ENCODE measurements at regions of chr15 and their contacts with region 1.

Region 1: DNA sequence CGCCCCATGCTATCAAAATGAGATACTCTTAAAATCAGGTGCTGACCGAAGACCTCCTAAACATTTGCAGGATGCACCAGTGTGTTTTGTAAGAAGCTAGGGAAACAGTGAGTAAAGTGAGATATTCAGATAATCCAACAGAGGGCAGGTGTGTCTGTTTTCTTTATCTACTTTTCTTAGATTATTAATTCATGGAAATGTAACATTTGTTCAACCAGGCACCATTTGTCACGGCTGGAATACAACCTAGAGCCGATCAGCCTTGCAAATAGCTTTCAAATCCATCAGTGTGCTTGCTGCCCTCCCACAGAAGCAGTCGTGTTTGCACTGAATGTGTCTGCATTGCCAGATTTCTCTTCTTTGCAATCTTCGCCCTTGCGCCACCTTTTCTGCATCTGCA is 201.9 kb upstream of the CHRM5 start:
- DNase-seq: peak; percentile 30
- ATAC-seq: peak; percentile 40
- H3K4me3 ChIP-seq: no peak overlapping the region
- H3K27ac ChIP-seq: no peak overlapping the region
- H3K4me1 ChIP-seq: no peaks in the 10 kb centered on the region
- H3K27me3 ChIP-seq: peaks cover 21% of the 10 kb centered on the region
- CTCF ChIP-seq: peak; percentile 52; the same call in 1 of the 2 replicates

Region 2: GRCh38 chr15:33679061-33679460 is 87.3 kb before region 1 on chr15:
- CTCF ChIA-PET with region 1: no interaction called
- POLR2A ChIA-PET with region 1: no interaction called
- intact Hi-C with region 1: no loop called
- DNase-seq: no peak
- ATAC-seq: no peak
- H3K4me3 ChIP-seq: no peak overlapping the region
- H3K27ac ChIP-seq: no peak overlapping the region
- H3K4me1 ChIP-seq: no peaks in the 10 kb centered on the region
- H3K27me3 ChIP-seq: peaks cover 86% of the 10 kb centered on the region
- CTCF ChIP-seq: no peak

Region 3: DNA sequence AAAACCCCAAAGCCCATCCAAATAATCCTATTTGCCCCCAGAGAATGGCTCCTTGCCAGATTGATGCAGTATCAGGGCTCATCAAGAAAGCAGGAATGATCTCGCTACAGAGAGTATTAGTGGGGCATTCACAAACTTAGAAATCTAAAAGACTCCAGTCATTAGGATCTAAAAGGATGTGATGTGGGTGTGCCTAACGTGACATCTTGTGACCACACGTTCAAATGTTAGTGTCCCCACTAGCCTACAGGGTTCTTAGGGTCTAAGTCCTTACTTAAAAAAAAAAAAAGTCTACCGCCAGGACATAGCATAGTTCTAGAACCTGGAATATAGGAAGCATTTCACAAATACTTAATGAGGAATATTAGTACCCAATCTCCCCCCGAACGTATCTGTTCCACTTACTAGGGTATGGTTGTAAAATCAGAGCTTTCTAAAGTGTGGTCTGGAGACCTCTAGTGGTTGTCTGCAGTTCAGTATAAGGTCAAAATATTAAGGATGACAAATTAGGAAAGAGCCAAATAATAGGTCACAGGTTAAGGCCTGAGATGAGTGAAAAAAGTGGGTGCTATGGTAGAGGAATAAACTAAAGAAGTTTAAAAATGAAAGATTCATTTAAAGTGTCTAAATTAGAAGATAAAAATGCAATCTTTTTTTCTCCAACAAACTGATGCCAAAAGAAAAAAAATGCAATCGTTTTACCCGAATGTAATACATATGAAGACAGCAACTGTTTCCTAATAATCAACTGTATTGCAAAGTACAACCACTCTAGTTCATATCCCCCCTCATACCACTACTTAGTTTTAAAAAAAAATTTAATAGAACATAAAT is 197.7 kb after region 1 on chr15:
- CTCF ChIA-PET with region 1: interaction called, 3 read pairs
- POLR2A ChIA-PET with region 1: no interaction called
- intact Hi-C with region 1: loop called (anchors 2 kb)
- DNase-seq: peak; percentile 68
- ATAC-seq: peak; percentile 80
- H3K4me3 ChIP-seq: no peak overlapping the region
- H3K27ac ChIP-seq: no peak overlapping the region
- H3K4me1 ChIP-seq: peaks cover 17% of the 10 kb centered on the region
- H3K27me3 ChIP-seq: no peaks in the 10 kb centered on the region
- CTCF ChIP-seq: peak; percentile 93

Region 4: DNA sequence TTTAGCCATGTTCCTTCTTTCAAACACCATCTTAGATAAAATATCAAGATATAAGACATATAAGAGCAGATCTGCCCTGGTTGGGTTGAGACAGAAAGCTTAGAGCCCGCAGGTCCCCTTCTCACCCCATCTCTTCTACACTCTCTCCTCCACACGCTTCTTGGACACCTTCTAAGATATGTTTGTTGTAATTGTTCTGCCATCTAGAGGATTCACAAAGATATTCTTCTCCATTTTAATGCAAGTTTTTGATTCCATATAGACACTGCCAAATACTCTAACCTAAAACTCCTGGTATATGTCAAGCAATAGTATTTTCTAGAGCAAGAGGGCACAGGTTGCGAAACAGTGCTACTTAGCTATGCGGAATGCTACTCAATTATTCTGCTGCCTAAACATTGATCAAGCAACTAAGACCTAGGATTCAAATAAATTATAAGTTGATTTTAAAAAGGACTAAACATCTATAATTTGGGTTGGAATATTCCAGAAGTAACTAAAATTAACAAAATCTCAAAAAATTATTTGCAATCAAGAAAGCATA is 208.7 kb after region 1 on chr15:
- CTCF ChIA-PET with region 1: no interaction called
- POLR2A ChIA-PET with region 1: no interaction called
- intact Hi-C with region 1: loop called (anchors 1 kb)
- DNase-seq: peak; percentile 37
- ATAC-seq: peak; percentile 57; the same call in 1 of the 2 replicates
- H3K4me3 ChIP-seq: no peak overlapping the region
- H3K27ac ChIP-seq: no peak overlapping the region
- H3K4me1 ChIP-seq: no peaks in the 10 kb centered on the region
- H3K27me3 ChIP-seq: no peaks in the 10 kb centered on the region
- CTCF ChIP-seq: peak; percentile 43; the same call in 1 of the 2 replicates

Region 5: DNA sequence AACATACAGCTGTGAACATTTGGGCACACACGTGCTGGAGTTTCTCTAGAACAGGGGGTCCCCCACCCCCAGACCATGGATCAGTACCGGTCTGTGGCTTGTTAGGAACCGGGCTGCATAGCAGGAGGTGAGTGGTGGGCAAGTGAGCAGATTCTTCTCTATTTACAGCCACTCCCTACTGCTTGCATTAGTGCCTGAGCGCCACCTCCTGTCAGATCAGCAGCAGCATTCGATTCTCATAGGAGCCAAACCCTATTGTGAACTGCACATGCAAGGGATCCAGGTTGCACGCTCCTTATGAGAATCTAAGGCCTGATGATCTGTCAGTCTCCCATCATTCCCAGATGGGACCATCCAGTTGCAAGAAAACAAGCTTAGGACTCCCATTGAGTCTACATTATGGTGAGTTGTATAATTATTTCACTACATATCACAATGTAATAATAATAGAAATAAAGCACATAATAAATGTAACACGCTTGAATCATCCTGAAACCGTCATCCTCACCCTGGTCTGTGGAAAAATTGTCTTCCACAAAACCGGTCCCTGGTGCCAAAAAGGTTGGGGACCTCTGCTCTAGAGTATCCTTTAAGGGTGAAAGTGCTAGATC is 227.7 kb after region 1 on chr15:
- CTCF ChIA-PET with region 1: no interaction called
- POLR2A ChIA-PET with region 1: no interaction called
- intact Hi-C with region 1: loop called (anchors 1 kb)
- DNase-seq: peak; percentile 68
- ATAC-seq: peak; percentile 98
- H3K4me3 ChIP-seq: no peak overlapping the region
- H3K27ac ChIP-seq: no peak overlapping the region
- H3K4me1 ChIP-seq: no peaks in the 10 kb centered on the region
- H3K27me3 ChIP-seq: no peaks in the 10 kb centered on the region
- CTCF ChIP-seq: peak; percentile 80

Region 6: DNA sequence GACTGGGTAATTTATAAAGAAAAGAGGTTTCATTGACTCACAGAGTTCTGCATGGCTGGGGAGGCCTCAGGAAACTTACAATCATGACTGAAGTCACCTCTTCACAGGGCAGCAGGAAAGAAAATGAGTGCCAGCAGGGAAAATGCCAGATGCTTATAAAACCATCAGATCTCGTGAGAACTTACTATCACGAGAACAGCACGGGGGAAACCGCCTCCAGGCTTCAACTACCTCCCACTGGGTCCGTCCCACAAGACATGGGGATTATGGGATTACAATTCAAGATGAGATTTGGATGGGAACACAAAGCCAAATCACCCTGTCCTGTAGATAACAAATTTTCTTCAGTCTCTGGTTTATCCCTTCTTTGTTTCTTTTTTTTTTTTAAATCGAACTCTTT is 303.6 kb after region 1 on chr15:
- CTCF ChIA-PET with region 1: interaction called, 10 read pairs
- POLR2A ChIA-PET with region 1: no interaction called
- intact Hi-C with region 1: no loop called
- DNase-seq: no peak
- ATAC-seq: no peak
- H3K4me3 ChIP-seq: no peak overlapping the region
- H3K27ac ChIP-seq: no peak overlapping the region
- H3K4me1 ChIP-seq: no peaks in the 10 kb centered on the region
- H3K27me3 ChIP-seq: no peaks in the 10 kb centered on the region
- CTCF ChIP-seq: no peak

Measured in PC-3 (cell line).